CD8-positive, alpha-beta T cell (primary cell): ENCODE measurements at regions of chr17 and their contacts with region 1.

Region 1: DNA sequence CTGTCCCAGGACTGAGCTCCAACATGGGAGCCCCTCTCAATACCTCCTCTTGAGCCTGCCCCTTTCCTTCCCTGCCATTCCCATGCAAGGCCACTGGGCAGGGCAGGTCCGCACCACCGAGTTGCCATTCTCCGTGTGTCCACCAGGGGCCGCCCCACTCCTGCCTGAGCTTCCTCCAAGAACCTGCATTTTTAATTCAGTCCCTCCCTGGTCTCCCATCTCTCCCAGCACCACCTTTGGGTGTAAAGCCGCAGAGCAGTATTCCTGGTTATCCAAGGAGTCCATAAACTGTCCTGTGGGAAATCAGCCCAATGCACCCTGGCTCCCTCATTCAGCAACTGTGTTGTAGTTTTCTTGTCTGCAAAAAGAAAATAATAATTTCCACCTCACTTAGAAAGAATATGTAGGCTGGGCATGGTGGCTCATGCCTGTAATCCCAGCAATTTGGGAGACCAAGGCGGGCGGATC is 15.9 kb upstream of the ANKRD40CL start:
- DNase-seq: peak; percentile 62 to 87 (median 79)
- ATAC-seq: peak; percentile 81
- H3K4me3 ChIP-seq: no peak overlapping the region
- H3K4me3 Mint-ChIP-seq: no peak overlapping the region
- H3K27ac ChIP-seq: no peak overlapping the region
- H3K27ac Mint-ChIP-seq: no peak overlapping the region
- H3K4me1 ChIP-seq: peaks cover 19% of the 10 kb centered on the region
- H3K4me1 Mint-ChIP-seq: peaks cover 29% of the 10 kb centered on the region
- H3K27me3 ChIP-seq: no peaks in the 10 kb centered on the region
- H3K27me3 Mint-ChIP-seq: peaks cover 9% of the 10 kb centered on the region
- CTCF ChIP-seq: peak; percentile 92

Region 2: DNA sequence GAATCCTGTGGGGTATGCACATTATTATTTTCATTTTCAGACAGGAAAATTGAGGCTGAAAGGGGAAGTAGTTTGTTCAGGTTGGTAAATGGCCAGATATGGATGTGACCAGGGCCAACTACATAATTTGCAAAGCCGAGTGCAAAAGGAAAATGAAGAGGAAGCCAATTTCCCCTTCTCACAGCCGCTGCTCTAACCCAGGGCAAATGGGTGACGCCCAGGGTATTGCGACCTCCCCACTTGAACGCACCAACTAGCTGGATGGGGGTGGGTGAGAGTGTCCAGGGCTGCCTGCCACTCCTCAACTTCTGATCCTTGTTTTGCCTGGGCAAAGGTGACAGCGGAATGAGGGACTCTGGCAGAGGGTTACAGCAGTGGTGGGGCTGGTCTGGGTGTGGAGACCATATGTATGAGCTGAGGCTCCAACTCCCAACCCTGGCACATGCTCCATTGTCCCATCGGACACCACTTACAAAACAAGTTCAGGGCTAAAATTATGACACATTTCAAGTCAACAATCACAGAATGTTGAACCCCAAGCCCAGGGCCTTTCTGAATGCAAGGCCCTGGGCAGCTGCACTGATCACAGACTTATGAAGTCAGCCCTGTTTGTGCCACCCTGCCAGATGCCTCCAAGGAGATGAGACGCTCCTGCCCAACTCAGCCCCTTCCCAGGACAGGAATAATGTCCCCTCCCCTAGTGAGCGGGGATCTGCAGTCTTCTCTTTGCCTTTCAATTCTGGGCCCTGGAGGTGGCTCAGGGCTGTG is 17.6 kb before region 1 on chr17:
- CTCF ChIA-PET with region 1: interaction called, 17 read pairs
- POLR2A ChIA-PET with region 1: interaction called, 3 read pairs
- intact Hi-C with region 1: no loop called
- DNase-seq: peak in 1 of 9 experiments; percentile 36
- ATAC-seq: no peak
- H3K4me3 ChIP-seq: no peak overlapping the region
- H3K4me3 Mint-ChIP-seq: no peak overlapping the region
- H3K27ac ChIP-seq: no peak overlapping the region
- H3K27ac Mint-ChIP-seq: no peak overlapping the region
- H3K4me1 ChIP-seq: peaks cover 10% of the 10 kb centered on the region
- H3K4me1 Mint-ChIP-seq: peaks cover 10% of the 10 kb centered on the region
- H3K27me3 ChIP-seq: peaks cover 0 to 2% of the 10 kb centered on the region in 2 experiments
- H3K27me3 Mint-ChIP-seq: peaks cover 12% of the 10 kb centered on the region
- CTCF ChIP-seq: no peak

Region 3: DNA sequence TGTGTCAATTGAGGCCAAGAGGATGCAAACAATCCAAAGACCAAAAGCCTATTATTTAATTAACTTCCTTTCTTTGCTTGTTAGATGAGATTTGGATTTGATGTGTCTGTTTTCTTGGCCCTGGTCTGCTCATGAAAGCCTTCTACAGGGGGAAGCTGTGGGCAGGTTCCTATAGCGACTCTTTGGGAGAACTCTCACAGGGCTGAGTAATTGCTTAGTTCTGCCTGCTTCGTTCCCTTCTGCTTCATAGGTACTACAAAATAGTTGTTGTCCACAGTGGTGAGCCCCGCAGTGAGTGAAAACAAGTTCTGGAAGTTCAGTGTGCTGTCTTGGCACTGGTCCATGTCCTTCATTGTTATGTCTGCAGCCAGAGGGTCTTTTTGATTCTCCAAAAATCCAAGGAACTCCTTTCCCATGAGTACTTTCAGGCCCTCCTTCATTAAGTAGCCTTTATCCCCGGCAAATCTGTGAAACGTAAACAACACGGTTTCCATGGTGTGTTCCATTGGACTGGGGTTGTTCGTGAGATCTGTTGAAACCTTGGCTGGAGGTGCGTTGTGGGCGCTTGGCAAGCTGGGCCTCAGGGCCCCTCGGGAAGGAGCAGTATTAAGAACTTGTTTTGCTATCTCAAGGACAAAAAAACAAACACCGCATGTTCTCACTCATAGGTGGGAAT is 14.0 kb after region 1 on chr17:
- CTCF ChIA-PET with region 1: interaction called, 20 read pairs
- POLR2A ChIA-PET with region 1: interaction called, 3 read pairs
- intact Hi-C with region 1: no loop called
- DNase-seq: no peak
- ATAC-seq: no peak
- H3K4me3 ChIP-seq: no peak overlapping the region
- H3K4me3 Mint-ChIP-seq: no peak overlapping the region
- H3K27ac ChIP-seq: no peak overlapping the region
- H3K27ac Mint-ChIP-seq: no peak overlapping the region
- H3K4me1 ChIP-seq: no peaks in the 10 kb centered on the region
- H3K4me1 Mint-ChIP-seq: no peaks in the 10 kb centered on the region
- H3K27me3 ChIP-seq: no peaks in the 10 kb centered on the region
- H3K27me3 Mint-ChIP-seq: no peaks in the 10 kb centered on the region
- CTCF ChIP-seq: no peak

Region 4: DNA sequence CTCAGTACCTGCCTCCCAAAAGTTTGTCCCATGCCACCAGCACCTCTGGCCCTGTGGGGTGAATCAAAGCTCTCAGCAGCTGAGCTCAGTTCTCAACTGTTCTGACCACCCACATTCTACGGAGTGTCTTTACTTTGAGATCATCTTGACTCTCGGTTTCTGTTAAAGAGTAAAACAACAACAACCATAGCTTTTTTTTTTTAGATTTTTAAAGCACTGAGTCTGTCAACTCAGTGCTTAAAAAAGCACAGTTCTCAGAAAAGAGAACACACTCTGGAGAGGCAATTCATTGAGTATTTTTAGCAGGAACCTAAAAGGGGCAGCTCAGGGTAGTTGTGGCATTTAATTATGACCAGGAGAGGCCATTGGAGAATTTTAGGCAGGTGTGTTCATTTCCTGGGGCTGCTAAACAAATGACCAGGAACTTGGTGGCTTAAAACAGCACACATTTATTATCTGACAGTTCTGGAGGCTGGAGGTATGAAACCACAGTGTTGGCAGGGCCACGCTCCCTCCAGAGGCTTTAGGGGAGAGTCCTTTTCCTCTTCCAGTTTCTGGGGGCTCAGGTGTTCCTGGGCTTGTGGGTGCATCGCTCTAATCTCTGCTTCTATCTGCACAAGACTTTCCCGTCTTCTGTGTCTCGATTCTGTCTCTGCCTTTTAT is 45.4 kb after region 1 on chr17:
- CTCF ChIA-PET with region 1: interaction called, 12 read pairs
- POLR2A ChIA-PET with region 1: no interaction called
- intact Hi-C with region 1: no loop called
- DNase-seq: no peak
- ATAC-seq: no peak
- H3K4me3 ChIP-seq: no peak overlapping the region
- H3K4me3 Mint-ChIP-seq: no peak overlapping the region
- H3K27ac ChIP-seq: no peak overlapping the region
- H3K27ac Mint-ChIP-seq: no peak overlapping the region
- H3K4me1 ChIP-seq: no peaks in the 10 kb centered on the region
- H3K4me1 Mint-ChIP-seq: no peaks in the 10 kb centered on the region
- H3K27me3 ChIP-seq: no peaks in the 10 kb centered on the region
- H3K27me3 Mint-ChIP-seq: peaks cover 7% of the 10 kb centered on the region
- CTCF ChIP-seq: no peak

Region 5: GRCh38 chr17:50841949-50842354 is 58.7 kb after region 1 on chr17:
- CTCF ChIA-PET with region 1: interaction called, 18 read pairs
- POLR2A ChIA-PET with region 1: no interaction called
- intact Hi-C with region 1: loop called (anchors 2 kb)
- DNase-seq: peak in 8 of 9 experiments; percentile 21 to 67 (median 51)
- ATAC-seq: peak; percentile 69
- H3K4me3 ChIP-seq: no peak overlapping the region
- H3K4me3 Mint-ChIP-seq: no peak overlapping the region
- H3K27ac ChIP-seq: no peak overlapping the region
- H3K27ac Mint-ChIP-seq: no peak overlapping the region
- H3K4me1 ChIP-seq: no peaks in the 10 kb centered on the region
- H3K4me1 Mint-ChIP-seq: no peaks in the 10 kb centered on the region
- H3K27me3 ChIP-seq: no peaks in the 10 kb centered on the region
- H3K27me3 Mint-ChIP-seq: no peaks in the 10 kb centered on the region
- CTCF ChIP-seq: peak; percentile 62

Region 6: GRCh38 chr17:50949989-50950881 is 167.0 kb after region 1 on chr17:
- CTCF ChIA-PET with region 1: interaction called, 43 read pairs
- POLR2A ChIA-PET with region 1: no interaction called
- intact Hi-C with region 1: loop called in 1 of 2 experiments (anchors 1 kb)
- DNase-seq: peak; percentile 32 to 80 (median 60)
- ATAC-seq: peak; percentile 87
- H3K4me3 ChIP-seq: no peak overlapping the region
- H3K4me3 Mint-ChIP-seq: no peak overlapping the region
- H3K27ac ChIP-seq: no peak overlapping the region
- H3K27ac Mint-ChIP-seq: no peak overlapping the region
- H3K4me1 ChIP-seq: peaks cover 12% of the 10 kb centered on the region
- H3K4me1 Mint-ChIP-seq: peaks cover 22% of the 10 kb centered on the region
- H3K27me3 ChIP-seq: no peaks in the 10 kb centered on the region
- H3K27me3 Mint-ChIP-seq: no peaks in the 10 kb centered on the region
- CTCF ChIP-seq: peak; percentile 49

Region 7: DNA sequence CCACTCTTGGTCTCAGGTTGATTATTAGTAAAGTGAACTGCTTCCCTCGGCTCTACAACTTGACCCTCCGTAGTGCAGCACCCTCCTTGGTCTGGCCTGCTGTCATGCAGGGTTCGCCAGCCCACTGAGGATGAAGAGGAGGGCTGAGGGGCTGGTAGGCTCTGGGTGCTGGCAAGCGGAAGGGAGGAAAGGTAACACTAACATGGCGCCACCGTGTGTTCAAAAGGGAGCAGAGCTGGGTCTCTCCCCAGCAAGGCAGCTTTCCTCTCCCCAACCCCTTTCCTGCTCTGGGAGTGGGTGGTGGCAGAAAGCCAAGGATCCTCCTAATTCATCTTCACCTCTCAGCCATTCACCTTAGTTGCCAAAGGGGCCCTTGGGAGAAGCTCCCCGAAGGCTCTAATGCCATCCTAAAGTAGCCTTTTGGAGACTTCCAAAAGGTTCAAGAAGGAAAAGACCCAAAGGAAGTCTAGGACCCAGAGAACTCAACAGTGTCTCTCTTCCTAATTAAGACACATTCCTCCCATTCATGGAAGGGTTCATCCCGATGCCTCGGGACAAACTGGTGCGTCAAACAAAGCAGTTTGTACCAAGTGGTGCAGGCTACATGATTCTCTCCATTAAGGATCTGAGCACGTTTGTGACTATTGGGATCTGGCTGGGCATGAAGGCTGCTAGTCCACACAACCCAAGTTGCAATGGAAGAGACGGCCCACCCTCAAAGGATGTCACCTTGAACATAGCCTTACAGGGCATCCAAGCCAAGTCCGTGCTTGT is 173.7 kb after region 1 on chr17:
- CTCF ChIA-PET with region 1: interaction called, 43 read pairs
- POLR2A ChIA-PET with region 1: interaction called, 4 read pairs
- intact Hi-C with region 1: loop called (anchors 1 kb)
- DNase-seq: peak; percentile 39 to 81 (median 71)
- ATAC-seq: peak; percentile 93
- H3K4me3 ChIP-seq: no peak overlapping the region
- H3K4me3 Mint-ChIP-seq: no peak overlapping the region
- H3K27ac ChIP-seq: no peak overlapping the region
- H3K27ac Mint-ChIP-seq: no peak overlapping the region
- H3K4me1 ChIP-seq: peaks cover 4% of the 10 kb centered on the region
- H3K4me1 Mint-ChIP-seq: peaks cover 3% of the 10 kb centered on the region
- H3K27me3 ChIP-seq: no peaks in the 10 kb centered on the region
- H3K27me3 Mint-ChIP-seq: no peaks in the 10 kb centered on the region
- CTCF ChIP-seq: peak; percentile 79